Activated CD4-positive, alpha-beta memory T cell treated with anti-CD3 and anti-CD28 coated beads for 36 hours (primary cell): ENCODE measurements at regions of chr6 and their contacts with region 1.

Region 1: DNA sequence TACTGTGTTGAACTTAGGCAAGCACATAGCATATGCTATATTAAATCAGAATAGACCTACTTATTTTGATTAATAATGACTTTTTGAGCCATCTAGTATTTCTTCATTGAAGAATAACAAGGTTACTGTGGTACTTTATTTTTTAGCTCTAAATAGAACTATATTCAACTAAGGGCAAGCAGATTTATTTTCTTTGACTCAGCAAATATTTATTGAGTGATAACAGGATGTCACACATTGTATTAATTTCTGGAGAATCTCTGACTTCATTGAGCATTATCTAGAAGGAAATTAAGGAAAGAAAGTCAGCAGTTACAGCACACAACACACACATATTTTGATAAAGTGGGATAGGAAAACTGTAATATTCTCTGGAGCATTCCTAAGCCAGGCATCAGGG is 407.4 kb downstream of the CD109 start:
- DNase-seq: no peak
- H3K4me3 Mint-ChIP-seq: no peak overlapping the region
- H3K27ac Mint-ChIP-seq: no peak overlapping the region
- H3K4me1 Mint-ChIP-seq: no peaks in the 10 kb centered on the region
- H3K27me3 Mint-ChIP-seq: peaks cover 2% of the 10 kb centered on the region

Region 2: DNA sequence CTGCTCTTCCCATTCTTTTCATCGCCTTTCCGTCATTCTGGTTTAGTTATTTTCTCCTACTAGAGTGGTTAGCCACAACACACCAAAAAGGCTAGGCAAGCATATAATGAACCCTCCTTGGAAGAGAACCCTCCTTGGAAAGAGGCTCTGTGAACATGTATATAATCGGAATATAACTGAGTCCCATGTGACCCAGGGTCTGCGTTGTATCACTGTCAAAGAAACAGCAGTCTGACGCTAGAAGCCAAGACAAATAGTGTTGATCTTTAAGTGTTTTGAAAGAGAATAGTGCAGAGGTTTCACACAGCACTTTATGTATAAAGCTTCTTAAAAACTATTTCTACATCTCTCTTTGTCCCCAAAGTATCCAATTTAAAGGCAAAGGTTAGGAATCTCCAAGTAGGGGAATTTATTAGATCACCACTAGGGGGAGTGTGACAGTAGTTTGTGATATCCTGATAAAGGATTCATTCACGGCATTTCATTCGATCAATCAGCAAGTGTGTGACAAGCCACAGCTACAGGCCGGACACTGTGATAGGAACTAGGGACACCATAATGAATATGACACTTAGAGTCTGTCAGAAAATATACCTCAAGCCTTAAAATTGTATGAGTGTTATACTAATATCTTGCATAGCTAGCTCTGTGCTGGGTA is 12.2 kb before region 1 on chr6:
- CTCF ChIA-PET with region 1: interaction called, 14 read pairs
- POLR2A ChIA-PET with region 1: no interaction called
- intact Hi-C with region 1: no loop called
- DNase-seq: no peak
- H3K4me3 Mint-ChIP-seq: no peak overlapping the region
- H3K27ac Mint-ChIP-seq: no peak overlapping the region
- H3K4me1 Mint-ChIP-seq: no peaks in the 10 kb centered on the region
- H3K27me3 Mint-ChIP-seq: peaks cover 3% of the 10 kb centered on the region